ENCODE measurements at regions of chr11 and their contacts with region 1.

Region 1: DNA sequence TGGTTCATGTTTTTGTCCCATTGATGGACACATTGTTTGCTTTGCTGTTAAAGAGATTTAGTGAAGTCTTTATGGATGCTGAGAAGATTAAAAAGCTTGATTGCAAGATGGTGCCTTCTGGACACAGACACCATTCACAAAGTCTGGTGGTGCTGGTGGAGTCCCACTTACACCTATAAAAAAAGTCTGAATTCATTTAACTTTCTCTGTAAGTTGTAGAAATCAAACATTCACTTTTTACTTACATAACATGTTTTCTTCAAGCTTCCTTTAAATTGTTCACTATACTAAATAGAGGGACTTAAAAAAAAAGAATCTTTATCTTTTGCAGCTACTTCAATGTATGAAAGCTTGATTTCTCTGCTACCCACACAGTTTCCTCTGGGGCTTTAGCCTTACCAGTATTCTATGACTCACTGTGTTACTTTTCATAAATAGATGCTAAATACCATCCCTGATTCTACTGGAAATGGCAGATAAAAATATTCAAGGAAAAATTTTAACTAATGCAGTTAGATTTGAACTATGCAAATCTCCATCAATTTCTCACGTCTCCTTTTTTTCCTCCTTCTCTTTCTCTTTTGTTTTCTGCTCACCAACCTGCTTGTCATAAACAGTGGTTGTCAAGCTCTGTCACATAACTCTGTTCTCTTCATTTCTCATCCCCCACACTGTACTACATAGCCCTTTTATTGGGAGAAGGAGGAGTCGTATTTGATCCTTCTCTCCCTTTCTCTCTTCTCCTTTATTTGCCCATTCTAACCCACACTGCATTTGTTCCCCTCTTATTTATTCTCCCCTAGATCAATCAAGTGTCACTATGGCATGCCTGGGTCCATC is 89.7 kb downstream of the FAM76B start:
- DNase-seq: peak in 7 of 9 donors; percentile 41 to 67 (median 49)
- ATAC-seq: peak; percentile 78
- H3K4me3 ChIP-seq: peak overlapping the region; percentile 36
- H3K4me3 Mint-ChIP-seq: peak overlapping the region; percentile 68 to 87 (median 76)
- H3K27ac ChIP-seq: peak overlapping the region; percentile 85
- H3K27ac Mint-ChIP-seq: peak overlapping the region in 8 of 9 donors; percentile 95 to 99 (median 96)
- H3K4me1 ChIP-seq: peaks cover 42 to 72% of the 10 kb centered on the region in 2 donors
- H3K4me1 Mint-ChIP-seq: peaks cover 32 to 65% (median 61%) of the 10 kb centered on the region in 7 donors
- H3K27me3 ChIP-seq: no peaks in the 10 kb centered on the region
- H3K27me3 Mint-ChIP-seq: no peaks in the 10 kb centered on the region

Region 2: GRCh38 chr11:95337175-95337957 is 362.5 kb before region 1 on chr11:
- CTCF ChIA-PET with region 1: interaction called, 3 read pairs
- POLR2A ChIA-PET with region 1: no interaction called
- intact Hi-C with region 1: loop called (anchors 2 to 5 kb)
- DNase-seq: peak; percentile 12 to 55 (median 39)
- ATAC-seq: peak; percentile 69
- H3K4me3 ChIP-seq: peak overlapping the region; percentile 36
- H3K4me3 Mint-ChIP-seq: no peak overlapping the region
- H3K27ac ChIP-seq: peak overlapping the region; percentile 59
- H3K27ac Mint-ChIP-seq: no peak overlapping the region
- H3K4me1 ChIP-seq: peaks cover 4 to 20% of the 10 kb centered on the region in 2 donors
- H3K4me1 Mint-ChIP-seq: peaks cover 0 to 12% (median under 1%) of the 10 kb centered on the region in 7 donors
- H3K27me3 ChIP-seq: no peaks in the 10 kb centered on the region
- H3K27me3 Mint-ChIP-seq: no peaks in the 10 kb centered on the region

Region 3: GRCh38 chr11:95545116-95545875 is 154.6 kb before region 1 on chr11:
- CTCF ChIA-PET with region 1: interaction called, 3 read pairs
- POLR2A ChIA-PET with region 1: interaction called, 4 read pairs
- intact Hi-C with region 1: loop called in 1 of 2 experiments (anchors 5 kb)
- DNase-seq: no peak
- ATAC-seq: no peak
- H3K4me3 ChIP-seq: no peak overlapping the region
- H3K4me3 Mint-ChIP-seq: no peak overlapping the region
- H3K27ac ChIP-seq: no peak overlapping the region
- H3K27ac Mint-ChIP-seq: no peak overlapping the region
- H3K4me1 ChIP-seq: peaks cover 0 to 33% of the 10 kb centered on the region in 2 donors
- H3K4me1 Mint-ChIP-seq: peaks cover 14 to 49% (median 45%) of the 10 kb centered on the region in 7 donors
- H3K27me3 ChIP-seq: no peaks in the 10 kb centered on the region
- H3K27me3 Mint-ChIP-seq: no peaks in the 10 kb centered on the region

Region 4: DNA sequence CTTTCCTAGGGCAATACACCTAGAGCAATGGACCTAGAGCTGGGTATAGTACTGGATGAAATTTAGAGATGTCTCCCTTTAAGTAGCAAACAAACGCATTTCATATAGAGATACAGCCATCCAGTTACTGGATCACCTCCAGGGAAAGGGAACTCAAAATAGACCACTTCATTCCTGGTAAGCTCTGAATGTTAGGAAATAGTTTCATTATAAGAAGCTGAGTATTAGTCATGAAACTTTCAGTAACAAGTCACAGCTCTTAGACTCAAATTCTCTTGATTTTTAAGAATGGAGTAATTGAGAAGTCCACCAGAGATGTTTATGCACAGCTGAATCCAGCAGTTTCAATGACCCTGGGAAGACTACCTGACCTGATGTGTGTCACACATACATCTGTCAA is 132.2 kb before region 1 on chr11:
- CTCF ChIA-PET with region 1: no interaction called
- POLR2A ChIA-PET with region 1: no interaction called
- intact Hi-C with region 1: no loop called
- DNase-seq: no peak
- ATAC-seq: no peak
- H3K4me3 ChIP-seq: no peak overlapping the region
- H3K4me3 Mint-ChIP-seq: no peak overlapping the region
- H3K27ac ChIP-seq: no peak overlapping the region
- H3K27ac Mint-ChIP-seq: no peak overlapping the region
- H3K4me1 ChIP-seq: peaks cover 0 to 3% of the 10 kb centered on the region in 2 donors
- H3K4me1 Mint-ChIP-seq: peaks cover 3 to 32% (median 26%) of the 10 kb centered on the region in 7 donors
- H3K27me3 ChIP-seq: no peaks in the 10 kb centered on the region
- H3K27me3 Mint-ChIP-seq: peaks cover 0 to 4% (median 0%) of the 10 kb centered on the region in 5 donors

Region 5: DNA sequence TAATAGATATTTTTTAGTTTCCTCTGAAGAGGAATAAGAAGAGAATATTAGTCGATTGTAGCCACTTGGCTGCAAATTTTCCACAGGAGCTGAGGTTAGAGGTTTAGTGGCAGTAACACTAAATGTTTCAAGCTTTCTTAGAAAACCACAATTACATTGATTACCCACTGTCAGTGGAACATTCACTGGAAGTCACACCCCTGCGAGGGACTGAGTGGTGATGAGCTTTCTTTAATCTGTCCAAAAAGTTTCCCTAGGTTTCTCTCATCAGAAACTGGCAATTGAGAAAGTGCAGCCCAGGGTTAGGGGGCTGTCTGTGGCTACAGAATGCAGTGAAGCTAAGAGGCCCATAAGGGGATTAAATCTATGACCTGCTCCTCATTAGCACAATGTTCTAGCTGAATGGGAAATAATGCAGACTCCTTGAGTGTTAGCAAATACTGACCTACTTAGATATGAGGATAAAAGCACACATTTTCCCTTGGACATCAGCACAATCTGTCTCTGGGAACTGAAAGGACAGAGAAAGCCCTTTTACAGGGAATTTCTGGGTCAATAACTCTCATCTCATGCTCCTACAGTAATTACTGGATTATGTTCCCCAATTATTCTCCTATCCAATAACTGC is 99.8 kb before region 1 on chr11:
- CTCF ChIA-PET with region 1: interaction called, 3 read pairs
- POLR2A ChIA-PET with region 1: no interaction called
- intact Hi-C with region 1: loop called in 1 of 2 experiments (anchors 5 kb)
- DNase-seq: peak in 1 of 9 donors; percentile 27
- ATAC-seq: no peak
- H3K4me3 ChIP-seq: no peak overlapping the region
- H3K4me3 Mint-ChIP-seq: peak overlapping the region in 4 of 10 donors; percentile 5 to 33 (median 19)
- H3K27ac ChIP-seq: peak overlapping the region; percentile 3
- H3K27ac Mint-ChIP-seq: peak overlapping the region in 4 of 9 donors; percentile 22 to 44 (median 32)
- H3K4me1 ChIP-seq: peaks cover 0 to 11% of the 10 kb centered on the region in 2 donors
- H3K4me1 Mint-ChIP-seq: peaks cover 8 to 34% (median 22%) of the 10 kb centered on the region in 7 donors
- H3K27me3 ChIP-seq: no peaks in the 10 kb centered on the region
- H3K27me3 Mint-ChIP-seq: no peaks in the 10 kb centered on the region

Region 6: DNA sequence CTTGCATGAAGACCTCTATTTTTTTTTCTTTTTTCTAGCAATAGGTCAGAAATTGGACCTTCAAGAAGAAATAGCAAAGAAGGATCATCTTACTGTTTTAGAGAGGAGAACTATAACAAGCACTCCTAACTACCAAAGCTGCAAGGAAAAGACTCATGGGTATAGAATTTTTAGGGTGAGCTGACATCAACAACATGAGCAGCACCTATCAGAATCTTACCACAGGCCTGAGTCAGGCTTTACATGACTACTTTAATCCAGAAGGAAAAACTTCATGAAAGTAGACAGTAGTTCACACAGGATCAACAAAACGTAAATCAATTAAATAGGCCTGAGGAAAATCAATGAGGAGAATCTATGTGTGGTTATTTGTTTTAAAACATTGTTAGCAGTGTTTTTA is 40.8 kb before region 1 on chr11:
- CTCF ChIA-PET with region 1: no interaction called
- POLR2A ChIA-PET with region 1: no interaction called
- intact Hi-C with region 1: loop called in 1 of 2 experiments (anchors 5 kb)
- DNase-seq: no peak
- ATAC-seq: no peak
- H3K4me3 ChIP-seq: no peak overlapping the region
- H3K4me3 Mint-ChIP-seq: peak overlapping the region in 2 of 10 donors; percentile 0 to 43
- H3K27ac ChIP-seq: no peak overlapping the region
- H3K27ac Mint-ChIP-seq: peak overlapping the region in 4 of 9 donors; percentile 30 to 82 (median 55)
- H3K4me1 ChIP-seq: peaks cover 0 to 7% of the 10 kb centered on the region in 2 donors
- H3K4me1 Mint-ChIP-seq: peaks cover 5 to 45% (median 33%) of the 10 kb centered on the region in 7 donors
- H3K27me3 ChIP-seq: no peaks in the 10 kb centered on the region
- H3K27me3 Mint-ChIP-seq: no peaks in the 10 kb centered on the region

Region 7: DNA sequence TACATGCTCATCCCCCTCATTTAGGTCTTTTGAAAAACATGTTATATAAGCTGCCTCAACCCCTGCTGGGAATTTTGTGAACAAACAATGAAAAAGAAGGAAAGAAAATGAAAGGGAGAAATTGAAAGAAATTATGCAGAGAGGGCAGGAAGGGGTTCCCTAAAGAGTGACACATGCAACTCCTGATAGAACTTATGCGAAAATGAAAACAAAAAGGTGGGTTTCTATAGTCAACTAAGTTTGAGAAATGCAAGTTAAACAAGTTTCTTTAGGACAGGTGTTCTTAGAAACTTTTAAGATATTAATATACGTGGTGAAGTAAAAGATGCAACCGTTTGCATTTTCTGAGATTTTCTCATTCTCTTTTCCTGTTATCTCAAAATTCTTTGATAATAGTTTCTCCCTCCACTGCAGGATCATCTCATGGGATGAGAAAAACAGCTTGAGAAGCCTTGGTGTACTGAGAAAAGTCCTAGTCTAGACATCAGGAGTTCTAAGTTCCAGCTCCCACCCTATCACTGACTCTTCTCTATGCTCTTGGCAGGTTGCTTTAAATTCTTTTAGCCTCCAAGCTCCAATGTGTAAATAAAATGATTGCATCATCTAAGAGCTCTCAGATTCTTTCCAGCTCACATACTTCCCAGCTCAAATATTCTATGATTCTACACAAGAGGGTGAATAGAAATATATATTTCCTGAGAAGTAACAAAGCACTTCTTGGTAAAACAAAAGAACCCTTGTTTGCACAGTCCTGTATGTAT is 19.5 kb before region 1 on chr11:
- CTCF ChIA-PET with region 1: interaction called, 8 read pairs
- POLR2A ChIA-PET with region 1: interaction called, 27 read pairs
- intact Hi-C with region 1: no loop called
- DNase-seq: no peak
- ATAC-seq: no peak
- H3K4me3 ChIP-seq: no peak overlapping the region
- H3K4me3 Mint-ChIP-seq: peak overlapping the region; percentile 21 to 78 (median 69)
- H3K27ac ChIP-seq: peak overlapping the region; percentile 60
- H3K27ac Mint-ChIP-seq: peak overlapping the region in 7 of 9 donors; percentile 44 to 87 (median 73)
- H3K4me1 ChIP-seq: peaks cover 0 to 41% of the 10 kb centered on the region in 2 donors
- H3K4me1 Mint-ChIP-seq: peaks cover 27 to 89% (median 71%) of the 10 kb centered on the region in 7 donors
- H3K27me3 ChIP-seq: no peaks in the 10 kb centered on the region
- H3K27me3 Mint-ChIP-seq: no peaks in the 10 kb centered on the region

Region 8: GRCh38 chr11:95863486-95864140 is 163.8 kb after region 1 on chr11:
- CTCF ChIA-PET with region 1: no interaction called
- POLR2A ChIA-PET with region 1: no interaction called
- intact Hi-C with region 1: no loop called
- DNase-seq: no peak
- ATAC-seq: no peak
- H3K4me3 ChIP-seq: no peak overlapping the region
- H3K4me3 Mint-ChIP-seq: no peak overlapping the region
- H3K27ac ChIP-seq: no peak overlapping the region
- H3K27ac Mint-ChIP-seq: no peak overlapping the region
- H3K4me1 ChIP-seq: no peaks in the 10 kb centered on the region
- H3K4me1 Mint-ChIP-seq: no peaks in the 10 kb centered on the region
- H3K27me3 ChIP-seq: no peaks in the 10 kb centered on the region
- H3K27me3 Mint-ChIP-seq: no peaks in the 10 kb centered on the region

Measured in naive thymus-derived CD4-positive, alpha-beta T cell (primary cell).